ENCODE measurements at regions of chr2 and their contacts with region 1.

Region 1: GRCh38 chr2:191171708-191172355 is 21.0 kb upstream of the STAT4 start:
- DNase-seq: no peak
- H3K4me3 Mint-ChIP-seq: no peak overlapping the region
- H3K27ac Mint-ChIP-seq: peak overlapping the region; percentile 5
- H3K4me1 Mint-ChIP-seq: peaks cover 58% of the 10 kb centered on the region
- H3K27me3 Mint-ChIP-seq: no peaks in the 10 kb centered on the region

Region 2: DNA sequence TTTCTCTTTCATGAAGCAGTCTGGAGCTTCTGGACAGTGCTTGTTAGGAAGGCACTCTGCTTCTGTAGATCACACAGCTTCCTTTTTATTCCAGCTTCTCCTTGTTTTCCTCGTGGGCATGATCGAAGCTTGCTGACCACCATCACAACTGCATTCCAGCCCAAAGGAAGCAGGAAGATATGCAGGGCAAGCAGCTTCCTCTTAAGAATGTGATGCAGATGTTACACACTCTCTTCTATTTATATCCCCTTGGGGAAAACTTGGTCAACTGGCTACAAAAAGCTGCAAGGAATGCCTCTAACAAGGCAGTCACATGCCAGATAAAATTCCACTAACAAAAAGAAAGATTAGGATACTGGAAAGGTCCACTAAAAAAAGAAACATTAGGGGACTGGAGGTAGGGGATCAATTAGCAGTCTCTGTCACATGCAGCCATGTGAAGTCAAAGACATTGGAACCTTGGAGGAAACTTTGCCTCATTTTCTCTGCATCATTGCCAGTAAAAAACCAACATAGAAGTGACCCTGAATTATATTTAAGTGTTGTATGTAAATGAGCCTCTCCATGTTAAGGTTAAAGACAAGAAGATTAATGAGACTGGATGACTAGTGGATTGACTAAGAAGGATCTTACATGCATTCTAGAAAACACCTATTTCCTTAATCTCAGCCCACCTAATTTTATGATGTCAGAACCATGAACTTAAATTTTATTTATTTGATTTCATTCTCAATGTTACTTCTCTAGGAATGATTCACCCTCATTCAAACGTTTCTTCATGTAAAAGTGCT is 424.7 kb before region 1 on chr2:
- intact Hi-C with region 1: no loop called
- DNase-seq: no peak
- H3K4me3 Mint-ChIP-seq: no peak overlapping the region
- H3K27ac Mint-ChIP-seq: no peak overlapping the region
- H3K4me1 Mint-ChIP-seq: peaks cover 19% of the 10 kb centered on the region
- H3K27me3 Mint-ChIP-seq: no peaks in the 10 kb centered on the region

Region 3: GRCh38 chr2:191218292-191218898 is 46.6 kb after region 1 on chr2:
- intact Hi-C with region 1: loop called (anchors 2 kb)
- DNase-seq: no peak
- H3K4me3 Mint-ChIP-seq: no peak overlapping the region
- H3K27ac Mint-ChIP-seq: no peak overlapping the region
- H3K4me1 Mint-ChIP-seq: peaks cover 19% of the 10 kb centered on the region
- H3K27me3 Mint-ChIP-seq: no peaks in the 10 kb centered on the region

Measured in activated T-helper 2 cell treated with anti-CD3 and anti-CD28 coated beads, Interferon-gamma antibody, Interleukin-2, Interleukin-4, amounts not matched to agents 10 μg/mL and 5 μg/mL and 100 μg/mL, durations not matched to agents 14 hours and 24 hours and 36 hours (primary cell).